ENCODE measurements at regions of chr1 and their contacts with region 1.

Region 1: DNA sequence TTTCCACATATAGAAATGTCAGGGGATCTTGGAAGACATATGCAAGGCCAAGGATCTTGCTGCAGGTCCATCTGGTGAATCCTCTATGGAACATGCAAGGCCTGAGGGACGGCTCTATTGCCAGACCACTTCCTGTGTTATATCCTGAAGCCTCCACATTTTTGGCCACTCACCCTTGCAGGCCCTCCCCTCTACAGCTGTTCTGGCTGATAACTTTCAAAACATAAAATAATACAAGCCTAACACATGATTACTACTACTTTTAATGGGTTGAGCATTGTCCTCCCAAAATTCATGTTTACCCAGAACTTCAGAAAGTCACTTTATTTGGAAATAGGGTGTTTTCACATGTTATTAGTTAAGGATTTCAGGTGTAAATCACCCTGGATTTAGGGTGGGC is 18.5 kb upstream of the LYPLAL1 start:
- DNase-seq: no peak
- H3K4me3 Mint-ChIP-seq: no peak overlapping the region
- H3K27ac Mint-ChIP-seq: no peak overlapping the region
- H3K4me1 Mint-ChIP-seq: no peaks in the 10 kb centered on the region
- H3K27me3 Mint-ChIP-seq: peaks cover 3% of the 10 kb centered on the region

Region 2: GRCh38 chr1:219066631-219067349 is 88.3 kb before region 1 on chr1:
- intact Hi-C with region 1: no loop called
- DNase-seq: no peak
- H3K4me3 Mint-ChIP-seq: no peak overlapping the region
- H3K27ac Mint-ChIP-seq: no peak overlapping the region
- H3K4me1 Mint-ChIP-seq: no peaks in the 10 kb centered on the region
- H3K27me3 Mint-ChIP-seq: no peaks in the 10 kb centered on the region

Region 3: DNA sequence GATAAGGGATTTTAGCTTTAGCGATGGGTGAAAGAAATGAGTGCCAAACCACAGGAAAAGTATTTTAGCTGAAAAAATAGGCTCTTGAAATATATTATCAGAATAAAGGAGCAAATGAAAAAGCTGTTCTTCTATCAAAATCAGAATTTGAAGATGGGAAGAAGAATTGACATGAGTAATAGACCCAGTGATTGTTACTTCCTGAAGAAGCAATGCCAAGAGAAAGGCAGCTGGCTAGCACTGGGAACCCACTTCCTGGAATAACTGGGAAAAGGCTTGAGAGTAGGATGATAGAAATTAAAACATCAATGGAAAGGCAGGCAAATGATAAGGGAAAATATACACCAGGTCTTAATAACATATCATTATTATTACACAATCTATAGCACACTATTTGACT is 11.4 kb before region 1 on chr1:
- intact Hi-C with region 1: loop called (anchors 1 kb)
- DNase-seq: no peak
- H3K4me3 Mint-ChIP-seq: no peak overlapping the region
- H3K27ac Mint-ChIP-seq: no peak overlapping the region
- H3K4me1 Mint-ChIP-seq: no peaks in the 10 kb centered on the region
- H3K27me3 Mint-ChIP-seq: peaks cover 2% of the 10 kb centered on the region

Measured in activated T-helper 1 cell treated with anti-CD3 and anti-CD28 coated beads, Interleukin-12 subunit alpha, Interleukin-12 subunit beta, Interleukin-2, Interleukin-4 antibody, amounts not matched to agents 30 ng/mL and 10 ng/mL and 1 ng/mL, durations not matched to agents 14 hours and 24 hours and 36 hours (primary cell).